Panc1 (cell line): ENCODE measurements at regions of chr12 and their contacts with region 1.

Region 1: GRCh38 chr12:121550974-121551634 is 29.7 kb downstream of the KDM2B start:
- DNase-seq: no peak
- ATAC-seq: no peak
- H3K4me3 ChIP-seq: no peak overlapping the region
- H3K27ac ChIP-seq: no peak overlapping the region
- H3K4me1 ChIP-seq: no peaks in the 10 kb centered on the region
- H3K27me3 ChIP-seq: no peaks in the 10 kb centered on the region
- CTCF ChIP-seq: no peak

Region 2: GRCh38 chr12:121536899-121537813 is 13.9 kb before region 1 on chr12:
- CTCF ChIA-PET with region 1: interaction called, 3 read pairs
- POLR2A ChIA-PET with region 1: interaction called, 14 read pairs
- in situ Hi-C with region 1: no loop called
- intact Hi-C with region 1: no loop called
- DNase-seq: no peak
- ATAC-seq: peak; percentile 80
- H3K4me3 ChIP-seq: peak overlapping the region; percentile 48 to 54
- H3K27ac ChIP-seq: 0 out of 2 replicates have a peak overlapping the region, but pooled peaks have one; percentile 36
- H3K4me1 ChIP-seq: peaks cover 10% of the 10 kb centered on the region; the same call in 1 of the 2 replicates
- H3K27me3 ChIP-seq: no peaks in the 10 kb centered on the region
- CTCF ChIP-seq: no peak

Region 3: DNA sequence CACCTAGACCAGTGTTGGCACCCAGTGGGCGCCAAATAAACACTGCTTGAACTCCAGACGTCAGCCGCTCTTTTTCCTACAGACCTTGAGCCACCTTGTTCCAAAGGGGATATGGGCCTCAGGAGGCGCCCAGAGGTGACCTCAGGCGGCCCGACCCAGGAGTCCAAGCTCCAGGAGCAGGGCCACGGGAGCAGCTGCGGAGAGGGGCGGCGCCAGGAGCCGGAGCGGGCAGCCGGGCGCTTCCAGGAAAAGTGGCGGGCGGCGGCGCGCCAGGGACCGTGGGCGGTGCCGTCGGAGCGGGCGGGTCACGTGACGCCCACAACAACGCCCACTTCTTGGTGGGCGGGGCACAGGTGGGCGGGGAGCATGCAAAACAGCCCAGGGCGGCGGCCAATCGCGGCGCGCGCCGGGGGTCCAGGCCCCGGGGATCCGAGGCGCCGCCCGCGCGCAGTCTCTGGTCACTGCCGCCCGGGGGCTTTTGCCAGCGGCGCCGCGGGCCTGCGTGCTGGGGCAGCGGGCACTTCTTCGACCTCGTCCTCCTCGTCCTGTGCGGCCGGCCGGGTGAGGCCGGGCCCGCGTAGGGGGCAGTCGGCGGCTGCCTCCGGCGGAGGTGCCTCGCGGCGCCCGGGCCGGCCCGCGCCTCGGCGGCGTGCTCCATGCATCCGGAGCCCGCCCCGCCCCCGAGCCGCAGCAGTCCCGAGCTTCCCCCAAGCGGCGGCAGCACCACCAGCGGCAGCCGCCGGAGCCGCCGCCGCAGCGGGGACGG is 75.2 kb after region 1 on chr12 and contains the start of gene ORAI1:
- CTCF ChIA-PET with region 1: interaction called, 31 read pairs
- POLR2A ChIA-PET with region 1: no interaction called
- in situ Hi-C with region 1: no loop called
- intact Hi-C with region 1: loop called (anchors 10 kb)
- DNase-seq: no peak
- ATAC-seq: peak; percentile 90
- H3K4me3 ChIP-seq: peak within 1 kb of the TSS; percentile 73 to 94
- H3K27ac ChIP-seq: peak within 1 kb of the TSS; percentile 84
- H3K4me1 ChIP-seq: peaks cover 25% of the 10 kb centered on the region
- H3K27me3 ChIP-seq: no peaks in the 10 kb centered on the region
- CTCF ChIP-seq: no peak
- total RNA-seq, gene ORAI1: 36.7 TPM

Region 4: GRCh38 chr12:121668750-121669520 is 117.8 kb after region 1 on chr12:
- CTCF ChIA-PET with region 1: interaction called, 27 read pairs
- POLR2A ChIA-PET with region 1: interaction called, 8 read pairs
- in situ Hi-C with region 1: no loop called
- intact Hi-C with region 1: no loop called
- DNase-seq: no peak
- ATAC-seq: no peak
- H3K4me3 ChIP-seq: no peak overlapping the region
- H3K27ac ChIP-seq: no peak overlapping the region
- H3K4me1 ChIP-seq: peaks cover 12% of the 10 kb centered on the region
- H3K27me3 ChIP-seq: no peaks in the 10 kb centered on the region
- CTCF ChIP-seq: no peak; the same call in 1 of the 2 replicates

Region 5: GRCh38 chr12:121678716-121679580 is 127.8 kb after region 1 on chr12:
- CTCF ChIA-PET with region 1: interaction called, 26 read pairs
- POLR2A ChIA-PET with region 1: no interaction called
- in situ Hi-C with region 1: no loop called
- intact Hi-C with region 1: loop called (anchors 5 kb)
- DNase-seq: no peak
- ATAC-seq: 0 out of 2 replicates have a peak, but pooled peaks have one; percentile 23
- H3K4me3 ChIP-seq: no peak overlapping the region
- H3K27ac ChIP-seq: no peak overlapping the region; the same call in 1 of the 2 replicates
- H3K4me1 ChIP-seq: no peaks in the 10 kb centered on the region
- H3K27me3 ChIP-seq: no peaks in the 10 kb centered on the region
- CTCF ChIP-seq: no peak

Region 6: GRCh38 chr12:121724930-121725329 is 173.8 kb after region 1 on chr12:
- CTCF ChIA-PET with region 1: no interaction called
- POLR2A ChIA-PET with region 1: interaction called, 12 read pairs
- in situ Hi-C with region 1: no loop called
- intact Hi-C with region 1: no loop called
- DNase-seq: no peak
- ATAC-seq: no peak
- H3K4me3 ChIP-seq: no peak overlapping the region
- H3K27ac ChIP-seq: no peak overlapping the region
- H3K4me1 ChIP-seq: no peaks in the 10 kb centered on the region
- H3K27me3 ChIP-seq: no peaks in the 10 kb centered on the region
- CTCF ChIP-seq: no peak